ENCODE measurements at regions of chr6 and their contacts with region 1.

Region 1: GRCh38 chr6:115896538-115897129 is 164.1 kb downstream of the FRK start:
- DNase-seq: peak; percentile 63
- H3K4me3 ChIP-seq: no peak overlapping the region
- H3K27ac ChIP-seq: no peak overlapping the region
- H3K4me1 ChIP-seq: peaks cover 3% of the 10 kb centered on the region
- H3K27me3 ChIP-seq: no peaks in the 10 kb centered on the region
- CTCF ChIP-seq: peak; percentile 92

Region 2: DNA sequence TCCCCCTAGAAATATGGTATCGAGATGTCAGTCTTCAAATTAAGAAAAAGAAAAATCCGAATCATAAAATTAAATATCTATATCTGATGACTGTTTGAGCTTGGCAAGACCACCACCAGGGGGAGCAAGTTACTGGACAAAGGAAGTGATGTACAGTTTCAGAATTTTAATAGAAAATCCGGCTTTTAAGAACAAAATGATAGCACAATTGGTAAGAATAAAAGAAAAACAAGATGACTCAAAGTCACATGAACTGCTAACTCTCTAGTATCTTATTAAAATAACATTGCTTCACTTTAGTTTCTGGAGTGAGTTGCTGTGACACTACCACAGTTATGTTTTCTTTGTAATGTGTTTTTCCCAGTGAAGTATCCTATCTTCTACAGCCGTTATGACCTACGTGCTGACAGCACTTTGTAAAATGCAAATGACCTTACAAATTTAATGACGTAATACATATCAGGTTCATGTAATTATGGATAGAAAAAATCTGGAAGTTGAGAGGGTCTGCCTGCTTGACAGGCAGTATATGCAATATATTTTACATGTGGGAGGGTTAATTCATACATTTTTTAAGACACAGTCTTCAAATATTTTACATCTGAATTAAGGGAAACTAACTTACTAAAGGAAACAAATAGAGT is 1148.5 kb before region 1 on chr6:
- CTCF ChIA-PET with region 1: no interaction called
- POLR2A ChIA-PET with region 1: no interaction called
- intact Hi-C with region 1: loop called (anchors 2 kb)
- DNase-seq: peak; percentile 49
- H3K4me3 ChIP-seq: no peak overlapping the region
- H3K27ac ChIP-seq: no peak overlapping the region
- H3K4me1 ChIP-seq: no peaks in the 10 kb centered on the region
- H3K27me3 ChIP-seq: no peaks in the 10 kb centered on the region
- CTCF ChIP-seq: peak; percentile 84

Region 3: GRCh38 chr6:115873901-115874300 is 22.7 kb before region 1 on chr6:
- CTCF ChIA-PET with region 1: no interaction called
- POLR2A ChIA-PET with region 1: no interaction called
- intact Hi-C with region 1: no loop called
- DNase-seq: no peak
- H3K4me3 ChIP-seq: no peak overlapping the region
- H3K27ac ChIP-seq: no peak overlapping the region
- H3K4me1 ChIP-seq: no peaks in the 10 kb centered on the region
- H3K27me3 ChIP-seq: peaks cover 41% of the 10 kb centered on the region
- CTCF ChIP-seq: no peak

Region 4: DNA sequence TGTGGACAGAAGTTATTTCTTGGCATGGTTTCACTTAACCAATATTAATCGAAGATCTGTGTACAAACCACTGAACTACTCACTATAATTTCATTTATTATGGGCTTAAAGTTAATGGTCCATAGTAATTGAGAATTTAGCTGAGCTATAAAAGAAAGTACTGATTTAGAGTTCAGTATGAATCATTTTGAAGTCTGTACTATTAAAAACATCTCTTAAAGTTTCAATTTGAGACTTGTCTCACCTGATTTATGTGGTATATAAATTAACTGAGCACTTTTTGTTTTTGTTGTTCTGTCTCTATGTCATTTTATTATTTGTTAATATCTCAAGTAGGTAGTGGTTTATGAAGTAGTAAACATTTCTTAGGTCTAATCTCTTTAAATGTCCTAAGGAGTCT is 809.3 kb after region 1 on chr6:
- CTCF ChIA-PET with region 1: no interaction called
- POLR2A ChIA-PET with region 1: no interaction called
- intact Hi-C with region 1: no loop called
- DNase-seq: no peak
- H3K4me3 ChIP-seq: no peak overlapping the region
- H3K27ac ChIP-seq: no peak overlapping the region
- H3K4me1 ChIP-seq: no peaks in the 10 kb centered on the region
- H3K27me3 ChIP-seq: no peaks in the 10 kb centered on the region
- CTCF ChIP-seq: no peak